ENCODE measurements at regions of chr3 and their contacts with region 1.

Region 1: DNA sequence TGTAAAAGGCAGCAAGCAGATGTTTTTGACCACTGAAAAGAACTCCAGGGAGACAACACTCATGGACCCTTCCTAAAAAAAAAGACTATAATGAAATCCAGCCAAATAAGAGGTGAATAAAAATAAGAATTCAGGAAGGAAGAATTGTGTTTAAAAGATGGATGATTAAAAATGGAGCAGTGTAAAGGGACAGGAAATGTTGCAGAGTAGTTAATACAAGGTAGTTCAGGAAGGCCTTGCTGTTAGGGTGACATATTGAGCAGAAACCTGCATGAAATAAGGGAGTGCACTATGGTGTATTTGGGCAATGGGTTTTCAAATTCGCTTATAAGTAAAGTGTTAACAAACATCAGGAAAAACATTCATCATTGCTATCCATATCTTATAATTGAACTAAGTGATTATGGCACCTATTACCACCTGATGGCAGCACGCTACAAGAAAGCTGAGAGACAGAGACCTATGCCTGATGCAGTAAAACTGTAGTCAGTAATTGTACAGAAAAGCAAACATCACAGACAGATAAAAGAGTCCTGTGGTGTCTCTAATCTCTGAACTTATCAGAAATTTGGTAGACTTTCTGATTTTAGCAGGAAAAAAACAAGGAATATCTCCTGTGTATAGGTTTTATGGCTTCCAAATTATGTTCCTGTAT is 5.8 kb upstream of the DBR1 start:
- DNase-seq: peak; percentile 59
- ATAC-seq: peak; percentile 93
- H3K4me3 ChIP-seq: no peak overlapping the region
- H3K27ac ChIP-seq: no peak overlapping the region
- H3K4me1 ChIP-seq: peaks cover 9% of the 10 kb centered on the region; the same call in 1 of the 2 replicates
- H3K27me3 ChIP-seq: no peaks in the 10 kb centered on the region
- CTCF ChIP-seq: peak; percentile 76

Region 2: DNA sequence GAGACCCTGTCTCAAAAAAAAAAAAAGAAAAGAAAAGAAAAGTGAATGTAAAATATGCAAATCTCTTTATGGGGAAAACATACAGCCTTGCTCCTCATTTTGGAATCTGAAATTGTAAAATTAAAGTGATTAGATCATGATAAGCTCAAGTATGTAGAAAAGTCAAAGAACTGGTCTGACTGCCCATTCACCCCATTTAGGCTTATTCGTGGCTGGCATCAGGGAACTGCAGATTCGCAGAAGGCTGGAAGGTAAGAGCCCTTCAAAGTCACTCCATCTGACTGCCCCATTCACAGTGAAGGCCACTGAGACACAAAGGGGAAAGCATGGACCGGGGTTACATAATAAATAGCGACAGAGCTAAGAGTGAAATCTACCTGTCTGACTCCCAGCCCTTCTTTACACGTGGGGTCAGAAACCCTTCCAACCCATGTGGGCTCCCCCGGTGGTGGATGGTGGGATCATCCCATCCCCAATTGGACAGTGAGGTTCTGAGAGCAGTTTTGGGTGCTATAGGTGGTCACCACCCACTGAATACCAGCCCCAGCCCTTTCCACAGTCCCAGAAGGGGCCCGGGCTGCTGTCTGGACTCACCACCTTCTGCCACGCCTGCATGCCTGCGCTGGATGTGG is 83.2 kb before region 1 on chr3:
- CTCF ChIA-PET with region 1: no interaction called
- POLR2A ChIA-PET with region 1: no interaction called
- intact Hi-C with region 1: no loop called
- DNase-seq: peak; percentile 33
- ATAC-seq: peak; percentile 50; the same call in 1 of the 2 replicates
- H3K4me3 ChIP-seq: no peak overlapping the region
- H3K27ac ChIP-seq: no peak overlapping the region
- H3K4me1 ChIP-seq: peaks cover 7% of the 10 kb centered on the region; the same call in 1 of the 2 replicates
- H3K27me3 ChIP-seq: no peaks in the 10 kb centered on the region
- CTCF ChIP-seq: peak; percentile 62

Region 3: GRCh38 chr3:138219255-138219654 is 38.8 kb after region 1 on chr3:
- CTCF ChIA-PET with region 1: no interaction called
- POLR2A ChIA-PET with region 1: no interaction called
- intact Hi-C with region 1: no loop called
- DNase-seq: no peak
- ATAC-seq: no peak
- H3K4me3 ChIP-seq: no peak overlapping the region
- H3K27ac ChIP-seq: no peak overlapping the region
- H3K4me1 ChIP-seq: peaks cover 4% of the 10 kb centered on the region
- H3K27me3 ChIP-seq: no peaks in the 10 kb centered on the region
- CTCF ChIP-seq: no peak

Region 4: DNA sequence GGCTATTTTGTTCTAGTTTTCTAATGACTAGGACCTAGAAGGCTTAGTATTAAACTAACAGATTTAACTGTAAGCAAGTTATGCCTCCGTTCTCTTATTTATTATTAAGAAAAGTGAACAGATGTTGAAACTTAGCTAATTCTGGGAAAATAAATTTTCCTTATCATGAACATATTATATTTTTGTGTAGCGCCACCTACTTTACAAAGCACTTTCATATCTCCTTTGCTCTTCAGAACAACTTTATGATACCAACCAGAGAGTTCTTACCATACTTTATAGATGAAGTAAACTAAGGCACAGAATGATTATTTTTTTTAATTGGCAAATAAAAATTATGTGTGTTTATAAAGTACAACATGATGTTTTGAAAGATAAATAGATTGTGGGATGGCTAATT is 89.7 kb after region 1 on chr3:
- CTCF ChIA-PET with region 1: interaction called, 3 read pairs
- POLR2A ChIA-PET with region 1: no interaction called
- intact Hi-C with region 1: loop called (anchors 1 kb)
- DNase-seq: peak; percentile 4
- ATAC-seq: no peak
- H3K4me3 ChIP-seq: no peak overlapping the region
- H3K27ac ChIP-seq: no peak overlapping the region
- H3K4me1 ChIP-seq: no peaks in the 10 kb centered on the region
- H3K27me3 ChIP-seq: no peaks in the 10 kb centered on the region
- CTCF ChIP-seq: peak; percentile 45

Region 5: GRCh38 chr3:138284957-138285477 is 104.5 kb after region 1 on chr3:
- CTCF ChIA-PET with region 1: interaction called, 4 read pairs
- POLR2A ChIA-PET with region 1: no interaction called
- intact Hi-C with region 1: loop called (anchors 1 kb)
- DNase-seq: peak; percentile 2
- ATAC-seq: peak; percentile 54
- H3K4me3 ChIP-seq: no peak overlapping the region
- H3K27ac ChIP-seq: no peak overlapping the region
- H3K4me1 ChIP-seq: no peaks in the 10 kb centered on the region
- H3K27me3 ChIP-seq: no peaks in the 10 kb centered on the region
- CTCF ChIP-seq: peak; percentile 42

Region 6: DNA sequence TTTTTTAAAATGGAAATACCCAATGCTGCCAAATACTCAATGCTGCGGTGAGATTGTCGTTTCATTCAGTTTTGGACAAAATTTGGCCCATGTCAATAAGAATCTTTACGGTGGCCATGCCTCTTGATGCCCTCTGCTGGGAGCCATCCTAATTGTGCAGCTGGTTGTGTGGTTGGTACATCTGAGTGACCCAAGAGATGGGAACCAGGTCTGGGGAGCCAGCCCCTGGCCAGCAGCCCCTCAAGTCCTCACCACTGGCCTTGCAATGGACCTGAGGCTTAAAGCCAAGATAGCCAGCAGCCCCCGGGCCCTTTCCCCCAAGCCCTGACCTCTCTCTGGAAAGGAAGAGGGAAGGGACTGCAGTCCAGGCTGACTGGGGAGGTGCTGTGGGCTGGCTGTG is 217.5 kb after region 1 on chr3:
- CTCF ChIA-PET with region 1: no interaction called
- POLR2A ChIA-PET with region 1: no interaction called
- intact Hi-C with region 1: loop called (anchors 1 kb)
- DNase-seq: peak; percentile 4
- ATAC-seq: no peak
- H3K4me3 ChIP-seq: no peak overlapping the region
- H3K27ac ChIP-seq: no peak overlapping the region
- H3K4me1 ChIP-seq: no peaks in the 10 kb centered on the region
- H3K27me3 ChIP-seq: no peaks in the 10 kb centered on the region
- CTCF ChIP-seq: peak; percentile 45; the same call in 1 of the 2 replicates

Region 7: GRCh38 chr3:138417559-138417982 is 237.1 kb after region 1 on chr3:
- CTCF ChIA-PET with region 1: no interaction called
- POLR2A ChIA-PET with region 1: no interaction called
- intact Hi-C with region 1: loop called (anchors 5 kb)
- DNase-seq: peak; percentile 80
- ATAC-seq: peak; percentile 96
- H3K4me3 ChIP-seq: no peak overlapping the region
- H3K27ac ChIP-seq: no peak overlapping the region
- H3K4me1 ChIP-seq: no peaks in the 10 kb centered on the region
- H3K27me3 ChIP-seq: no peaks in the 10 kb centered on the region
- CTCF ChIP-seq: peak; percentile 86

Measured in PC-3 (cell line).